ENCODE measurements at regions of chr12 and their contacts with region 1.

Region 1: GRCh38 chr12:1185460-1186182 is 194.6 kb downstream of the ERC1 start:
- DNase-seq: no peak
- ATAC-seq: no peak

Region 2: GRCh38 chr12:1246637-1247036 is 61.0 kb after region 1 on chr12:
- intact Hi-C with region 1: loop called (anchors 2 kb)
- DNase-seq: no peak
- ATAC-seq: no peak